CD4-positive, alpha-beta T cell (primary cell): ENCODE measurements at regions of chr6 and their contacts with region 1.

Region 1: DNA sequence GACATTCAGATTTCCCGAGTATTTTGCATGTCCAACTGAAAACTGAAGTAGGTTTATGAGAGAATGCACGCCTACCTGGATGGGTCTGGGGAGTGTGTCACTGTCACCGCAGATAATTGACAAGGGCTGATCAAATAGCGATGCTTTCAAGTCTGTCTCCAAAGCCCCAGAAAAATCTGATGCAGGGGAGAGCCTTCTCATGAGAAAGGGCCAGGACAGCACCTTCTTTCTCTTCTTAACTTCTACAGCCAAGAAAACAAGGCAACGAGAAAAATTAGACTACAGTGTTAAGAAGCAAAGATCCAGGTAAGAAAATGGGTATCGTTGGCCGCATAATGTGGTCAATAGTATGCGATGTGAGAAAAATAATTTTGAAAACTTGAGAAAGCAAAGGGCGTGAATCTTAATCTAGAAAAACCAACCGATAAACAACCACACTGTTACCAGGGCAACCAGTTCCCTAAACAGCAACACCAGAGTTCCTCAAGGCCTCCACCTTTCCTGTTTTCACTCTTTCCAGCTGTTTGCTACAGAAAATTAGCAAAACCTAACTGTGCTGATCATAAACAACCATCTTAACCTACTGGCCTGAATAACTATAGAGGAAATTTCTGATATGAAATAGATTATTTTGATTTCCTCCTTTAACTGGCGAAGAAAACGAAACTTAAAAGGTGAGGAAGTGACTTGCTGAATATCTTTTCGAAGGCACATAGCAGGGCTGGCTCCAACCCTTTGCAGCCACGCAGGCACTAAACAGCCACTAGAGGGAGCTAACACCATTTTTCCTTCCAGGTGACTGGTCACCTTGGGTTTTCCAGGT is 2.6 kb downstream of the TAGAP start:
- DNase-seq: peak; percentile 57 to 94 (median 68)
- ATAC-seq: peak; percentile 54
- H3K4me3 ChIP-seq: peak overlapping the region; percentile 88
- H3K4me3 Mint-ChIP-seq: peak overlapping the region; percentile 97
- H3K27ac ChIP-seq: peak overlapping the region; percentile 81 to 91
- H3K27ac Mint-ChIP-seq: peak overlapping the region; percentile 91
- H3K4me1 ChIP-seq: peaks cover 61% of the 10 kb centered on the region
- H3K4me1 Mint-ChIP-seq: peaks cover 76% of the 10 kb centered on the region
- H3K27me3 ChIP-seq: no peaks in the 10 kb centered on the region
- H3K27me3 Mint-ChIP-seq: no peaks in the 10 kb centered on the region
- CTCF ChIP-seq: peak; percentile 99

Region 2: GRCh38 chr6:159017757-159018559 is 24.3 kb before region 1 on chr6:
- CTCF ChIA-PET with region 1: no interaction called
- POLR2A ChIA-PET with region 1: interaction called, 41 read pairs
- intact Hi-C with region 1: no loop called
- DNase-seq: peak in 1 of 14 experiments; percentile 34
- ATAC-seq: no peak
- H3K4me3 ChIP-seq: no peak overlapping the region
- H3K4me3 Mint-ChIP-seq: peak overlapping the region; percentile 46
- H3K27ac ChIP-seq: peak overlapping the region; percentile 9 to 57
- H3K27ac Mint-ChIP-seq: peak overlapping the region; percentile 45
- H3K4me1 ChIP-seq: peaks cover 44% of the 10 kb centered on the region
- H3K4me1 Mint-ChIP-seq: peaks cover 57% of the 10 kb centered on the region
- H3K27me3 ChIP-seq: no peaks in the 10 kb centered on the region
- H3K27me3 Mint-ChIP-seq: no peaks in the 10 kb centered on the region
- CTCF ChIP-seq: no peak

Region 3: DNA sequence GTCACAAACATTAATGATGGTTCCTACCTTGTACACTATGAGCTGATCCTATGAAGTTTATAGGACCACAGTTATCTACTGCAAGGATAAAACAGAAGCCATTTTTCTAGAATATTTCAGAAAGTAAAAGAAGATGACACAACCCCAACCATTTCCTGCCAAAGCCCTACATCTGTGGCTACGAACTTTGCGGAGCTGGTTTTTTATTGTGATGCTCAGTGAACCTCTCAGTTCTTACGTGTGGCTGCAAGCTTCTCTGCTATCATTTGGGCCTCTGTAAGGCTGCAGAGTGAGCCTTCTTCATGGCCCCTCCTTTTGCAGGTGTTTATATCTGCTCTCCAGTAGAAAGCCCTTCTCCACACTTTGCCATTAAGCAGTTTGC is 20.3 kb after region 1 on chr6:
- CTCF ChIA-PET with region 1: interaction called, 17 read pairs
- POLR2A ChIA-PET with region 1: interaction called, 146 read pairs
- intact Hi-C with region 1: loop called (anchors 1 to 2 kb)
- DNase-seq: peak in 13 of 14 experiments; percentile 27 to 90 (median 56)
- ATAC-seq: peak; percentile 89
- H3K4me3 ChIP-seq: peak overlapping the region; percentile 17
- H3K4me3 Mint-ChIP-seq: peak overlapping the region; percentile 67
- H3K27ac ChIP-seq: peak overlapping the region; percentile 84 to 90
- H3K27ac Mint-ChIP-seq: peak overlapping the region; percentile 96
- H3K4me1 ChIP-seq: peaks cover 63% of the 10 kb centered on the region
- H3K4me1 Mint-ChIP-seq: peaks cover 86% of the 10 kb centered on the region
- H3K27me3 ChIP-seq: no peaks in the 10 kb centered on the region
- H3K27me3 Mint-ChIP-seq: no peaks in the 10 kb centered on the region
- CTCF ChIP-seq: no peak

Region 4: DNA sequence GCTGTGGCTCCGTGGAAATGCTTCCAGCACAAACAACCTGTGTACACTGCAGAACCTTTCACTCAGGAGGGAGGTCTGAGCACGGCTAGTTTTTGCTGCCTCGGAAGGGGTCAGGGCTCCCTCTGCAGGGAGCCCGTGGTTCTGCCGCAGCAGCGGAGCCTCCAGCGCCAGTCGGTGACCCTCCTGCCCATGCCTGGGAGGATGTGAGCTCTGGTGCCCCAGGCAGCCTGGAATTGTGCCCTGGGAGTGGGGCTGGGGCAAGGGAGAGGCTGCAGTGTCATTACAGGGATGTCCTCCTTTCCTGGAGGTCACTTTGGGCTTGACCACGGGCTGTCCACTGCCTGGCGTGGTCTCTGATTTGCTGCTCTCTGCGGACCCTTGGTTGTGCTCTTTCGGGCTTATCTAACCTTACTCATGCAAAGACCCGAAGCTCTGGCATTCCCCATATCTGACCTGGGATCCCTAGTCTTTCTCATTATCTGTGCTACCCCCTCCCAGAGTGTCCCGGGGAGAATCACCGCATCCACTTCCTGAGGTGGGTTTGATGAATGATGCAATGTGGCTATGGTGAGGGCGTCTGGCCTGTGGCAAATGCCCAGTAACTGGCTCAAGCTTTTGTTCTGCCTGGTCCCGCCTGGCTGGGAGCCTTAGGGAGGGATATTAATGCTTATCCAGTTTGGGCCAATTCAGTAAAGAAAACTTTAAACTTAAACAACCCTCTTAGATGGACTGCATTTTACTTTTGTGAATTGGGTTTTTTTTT is 62.1 kb after region 1 on chr6:
- CTCF ChIA-PET with region 1: interaction called, 72 read pairs
- POLR2A ChIA-PET with region 1: interaction called, 120 read pairs
- intact Hi-C with region 1: loop called (anchors 1 kb)
- DNase-seq: peak; percentile 70 to 91 (median 76)
- ATAC-seq: peak; percentile 62
- H3K4me3 ChIP-seq: no peak overlapping the region
- H3K4me3 Mint-ChIP-seq: peak overlapping the region; percentile 31
- H3K27ac ChIP-seq: peak overlapping the region in 1 of 2 donors; percentile 55
- H3K27ac Mint-ChIP-seq: peak overlapping the region; percentile 38
- H3K4me1 ChIP-seq: peaks cover 80% of the 10 kb centered on the region
- H3K4me1 Mint-ChIP-seq: peaks cover 84% of the 10 kb centered on the region
- H3K27me3 ChIP-seq: no peaks in the 10 kb centered on the region
- H3K27me3 Mint-ChIP-seq: no peaks in the 10 kb centered on the region
- CTCF ChIP-seq: peak; percentile 93

Region 5: DNA sequence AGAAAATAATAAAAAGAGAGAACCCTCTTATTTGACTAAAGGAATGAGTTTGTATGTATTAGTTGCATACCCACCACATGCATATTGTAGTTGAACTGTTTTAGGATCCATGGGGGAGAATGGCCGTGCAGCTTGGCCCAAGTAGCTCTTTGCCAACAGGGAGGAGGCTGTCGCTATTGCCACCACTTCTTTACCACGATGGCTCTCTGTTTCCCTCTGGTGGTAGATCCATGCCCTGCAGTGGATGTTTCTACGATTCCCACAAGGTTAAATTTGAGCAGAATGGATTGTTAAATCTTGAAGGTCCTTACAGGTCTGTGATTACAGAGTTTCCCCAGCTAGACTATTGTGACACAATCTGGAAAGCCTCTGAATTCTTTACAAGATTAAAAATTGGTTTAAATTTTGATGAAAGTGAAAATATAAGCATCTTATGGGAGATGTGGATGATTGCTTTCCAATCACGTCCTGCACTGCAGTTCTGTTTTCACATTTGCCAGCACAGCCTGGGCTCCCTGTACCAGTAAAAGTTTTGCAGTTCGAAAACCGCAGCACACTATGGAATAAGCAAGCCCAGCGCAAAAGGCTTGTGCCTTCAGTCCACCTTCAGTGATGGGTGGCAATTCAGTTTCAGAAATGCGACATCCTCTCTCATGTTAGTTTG is 92.6 kb after region 1 on chr6:
- CTCF ChIA-PET with region 1: interaction called, 18 read pairs
- POLR2A ChIA-PET with region 1: interaction called, 8 read pairs
- intact Hi-C with region 1: loop called in 1 of 2 experiments (anchors 1 kb)
- DNase-seq: peak; percentile 56 to 88 (median 72)
- ATAC-seq: peak; percentile 99
- H3K4me3 ChIP-seq: no peak overlapping the region
- H3K4me3 Mint-ChIP-seq: no peak overlapping the region
- H3K27ac ChIP-seq: no peak overlapping the region
- H3K27ac Mint-ChIP-seq: no peak overlapping the region
- H3K4me1 ChIP-seq: peaks cover 5% of the 10 kb centered on the region
- H3K4me1 Mint-ChIP-seq: peaks cover 6% of the 10 kb centered on the region
- H3K27me3 ChIP-seq: no peaks in the 10 kb centered on the region
- H3K27me3 Mint-ChIP-seq: peaks cover 8% of the 10 kb centered on the region
- CTCF ChIP-seq: peak; percentile 98